ENCODE measurements at regions of chr3 and their contacts with region 1.

Region 1: DNA sequence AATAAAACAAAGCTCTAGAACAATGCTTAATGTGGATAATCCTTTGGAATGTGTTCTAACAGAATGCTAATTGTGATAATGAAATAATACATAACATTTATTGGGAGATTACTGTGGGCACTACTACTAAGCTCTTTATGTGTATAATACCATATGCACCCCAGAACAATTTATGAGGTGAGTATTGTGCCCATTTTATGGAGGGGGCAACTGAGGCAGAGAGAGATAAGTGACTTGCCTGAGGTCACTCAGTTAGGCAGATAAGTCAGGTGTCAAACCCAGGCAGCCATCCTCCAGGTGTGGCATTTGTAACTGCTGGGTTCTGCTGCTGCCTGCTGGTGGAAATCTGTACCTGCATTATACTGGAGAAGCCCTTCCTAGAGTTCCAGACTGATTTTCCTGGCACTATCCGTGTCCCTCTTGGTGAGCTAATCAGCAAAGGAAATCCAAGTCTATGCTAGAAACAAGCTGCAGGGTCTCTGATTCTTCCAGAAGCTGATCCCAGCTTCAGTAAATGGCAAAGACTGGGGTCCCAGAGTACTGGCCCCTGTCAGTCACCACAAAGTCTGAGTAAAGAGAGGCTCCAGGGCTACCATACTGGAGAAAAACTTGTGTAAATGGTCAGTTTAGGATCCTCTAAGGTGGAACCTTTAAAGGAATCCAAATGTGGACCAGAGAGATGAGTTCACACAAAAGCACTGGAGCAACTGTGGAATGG is 22.6 kb upstream of the RBP1 start:
- DNase-seq: no peak
- ATAC-seq: peak in 6 of 8 donors; percentile 46 to 80 (median 58)
- H3K4me3 ChIP-seq: no peak overlapping the region
- H3K27ac ChIP-seq: no peak overlapping the region
- H3K4me1 ChIP-seq: peaks cover 0 to 5% (median 0%) of the 10 kb centered on the region in 9 donors
- H3K27me3 ChIP-seq: no peaks in the 10 kb centered on the region
- CTCF ChIP-seq: peak; percentile 44 to 75 (median 64)

Region 2: DNA sequence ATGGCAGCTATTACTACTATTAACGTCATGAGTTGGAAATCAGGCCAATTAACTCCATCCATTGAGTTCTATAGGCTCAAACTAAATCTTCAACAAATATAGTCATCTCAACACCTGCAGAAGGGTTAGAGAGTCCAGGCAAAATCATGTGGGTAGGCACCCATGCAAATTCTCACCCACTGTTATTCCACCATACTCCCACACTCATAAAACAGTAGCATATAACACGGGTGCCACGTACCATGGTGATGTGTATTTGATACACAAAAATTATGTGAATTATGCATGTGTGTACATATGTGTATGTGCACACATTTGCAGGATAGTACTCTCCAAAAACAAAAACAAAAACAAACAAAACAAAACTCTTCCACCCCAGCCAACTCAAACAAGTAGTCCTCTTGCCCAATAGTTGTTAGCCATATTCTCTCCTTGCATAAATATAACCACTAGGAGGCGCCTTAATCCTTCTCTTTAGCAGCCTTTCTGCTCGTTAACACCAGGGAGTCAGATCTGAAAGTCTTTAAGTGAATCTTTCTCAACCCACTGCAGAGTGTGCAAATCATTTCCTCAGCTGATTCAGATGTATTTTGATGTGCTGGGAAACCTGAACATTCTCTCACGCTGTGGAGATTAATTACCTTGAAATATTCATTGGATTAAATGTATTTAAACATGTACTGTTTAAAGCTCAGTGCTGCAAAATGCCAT is 134.7 kb before region 1 on chr3:
- intact Hi-C with region 1: loop called (anchors 1 to 5 kb)
- DNase-seq: peak in 1 of 2 donors; percentile 40
- ATAC-seq: peak in 7 of 8 donors; percentile 73 to 93 (median 83)
- H3K4me3 ChIP-seq: no peak overlapping the region
- H3K27ac ChIP-seq: no peak overlapping the region
- H3K4me1 ChIP-seq: peaks cover 0 to 6% (median 0%) of the 10 kb centered on the region in 9 donors
- H3K27me3 ChIP-seq: no peaks in the 10 kb centered on the region
- CTCF ChIP-seq: peak; percentile 77 to 89 (median 84)

Region 3: GRCh38 chr3:139519998-139520737 is 42.0 kb before region 1 on chr3:
- intact Hi-C with region 1: no loop called
- DNase-seq: no peak
- ATAC-seq: peak in 4 of 8 donors; percentile 45 to 72 (median 54)
- H3K4me3 ChIP-seq: no peak overlapping the region
- H3K27ac ChIP-seq: no peak overlapping the region
- H3K4me1 ChIP-seq: peaks cover 0 to 16% (median 0%) of the 10 kb centered on the region in 9 donors
- H3K27me3 ChIP-seq: no peaks in the 10 kb centered on the region
- CTCF ChIP-seq: peak in 8 of 9 donors; percentile 6 to 46 (median 30)

Region 4: DNA sequence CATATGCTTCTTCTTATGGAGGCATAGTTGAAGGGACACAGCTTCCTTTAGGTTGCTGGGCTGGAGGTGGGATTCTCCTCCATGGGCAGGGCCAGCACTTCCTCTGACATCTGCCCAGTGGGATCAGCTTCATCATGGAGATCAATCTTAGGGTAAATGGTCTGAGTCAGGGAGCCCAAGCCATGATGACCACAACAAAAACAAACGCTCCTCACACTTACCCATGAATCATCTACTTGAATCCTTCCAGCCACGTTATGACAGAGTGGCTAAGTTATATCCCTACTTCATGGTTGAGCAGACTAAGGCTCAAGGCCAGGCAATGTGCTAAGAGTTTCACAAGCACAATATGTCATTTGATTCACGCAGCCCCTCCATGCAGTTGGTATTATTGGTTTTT is 202.8 kb after region 1 on chr3:
- intact Hi-C with region 1: no loop called
- DNase-seq: no peak
- ATAC-seq: no peak
- H3K4me3 ChIP-seq: no peak overlapping the region
- H3K27ac ChIP-seq: no peak overlapping the region
- H3K4me1 ChIP-seq: peaks cover 0 to 19% (median 0%) of the 10 kb centered on the region in 9 donors
- H3K27me3 ChIP-seq: no peaks in the 10 kb centered on the region
- CTCF ChIP-seq: no peak